Lower leg skin (tissue), 4 donors: ENCODE measurements at regions of chr15 and their contacts with region 1.

Region 1: GRCh38 chr15:91224755-91225380 is 124.8 kb downstream of the SV2B start:
- DNase-seq: no peak
- H3K4me3 ChIP-seq: no peak overlapping the region
- CTCF ChIP-seq: no peak
- POLR2A ChIP-seq: no peak

Region 2: GRCh38 chr15:91049378-91050127 is 175.3 kb before region 1 on chr15:
- intact Hi-C with region 1: loop called (anchors 10 kb)
- DNase-seq: peak in 1 of 2 donors; percentile 59
- H3K4me3 ChIP-seq: no peak overlapping the region
- CTCF ChIP-seq: no peak
- POLR2A ChIP-seq: no peak

Region 3: GRCh38 chr15:91289324-91289723 is 64.5 kb after region 1 on chr15:
- intact Hi-C with region 1: loop called (anchors 10 kb)
- DNase-seq: no peak
- H3K4me3 ChIP-seq: no peak overlapping the region
- CTCF ChIP-seq: no peak
- POLR2A ChIP-seq: no peak

Region 4: DNA sequence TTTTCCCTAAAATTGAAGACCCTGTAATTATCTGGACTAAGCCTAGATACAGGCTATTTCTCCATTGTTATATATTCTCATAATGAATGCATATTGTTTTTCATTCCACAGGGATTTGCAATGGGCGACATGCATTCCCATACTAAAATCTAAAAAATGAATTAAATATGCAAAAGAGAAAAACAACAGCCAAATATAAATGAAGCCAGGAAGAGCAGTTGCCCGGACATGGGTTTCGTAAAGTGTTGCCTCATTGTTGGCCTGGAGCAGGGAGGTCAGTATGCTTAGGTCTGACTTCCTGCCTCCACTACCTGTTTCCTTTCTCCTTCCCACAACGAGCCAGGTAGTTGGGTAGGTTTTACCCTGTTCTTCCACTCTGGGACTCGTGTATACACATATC is 601.6 kb after region 1 on chr15:
- intact Hi-C with region 1: no loop called
- DNase-seq: no peak
- H3K4me3 ChIP-seq: no peak overlapping the region
- CTCF ChIP-seq: no peak
- POLR2A ChIP-seq: no peak